ENCODE measurements at regions of chrX and their contacts with region 1.

Region 1: DNA sequence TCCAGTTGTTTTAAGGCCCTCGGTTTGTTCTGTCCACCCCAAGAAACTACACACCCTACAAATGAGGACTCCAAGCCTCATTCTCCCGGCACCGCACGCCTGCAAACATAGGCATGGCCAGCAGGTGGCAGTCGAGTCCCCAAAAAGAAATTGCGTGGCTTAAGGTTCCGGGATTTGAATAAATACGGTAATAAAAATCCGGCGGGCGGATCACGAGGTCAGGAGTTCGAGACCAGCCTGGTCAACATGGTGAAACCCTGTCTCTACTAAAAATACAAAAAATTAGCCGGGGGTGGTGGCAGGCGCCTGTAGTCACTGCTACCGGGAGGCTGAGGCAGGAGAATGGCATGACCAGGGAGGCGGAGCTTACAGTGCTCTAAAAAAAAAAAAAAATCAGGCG is 21.8 kb upstream of the CSF2RA start:
- DNase-seq: peak; percentile 74
- ATAC-seq: peak; percentile 53
- H3K4me3 ChIP-seq: no peak overlapping the region
- H3K27ac ChIP-seq: peak overlapping the region; percentile 65
- H3K4me1 ChIP-seq: peaks cover 7 to 46% of the 10 kb centered on the region in 2 experiments
- H3K27me3 ChIP-seq: no peaks in the 10 kb centered on the region
- CTCF ChIP-seq: peak in 2 of 3 experiments; percentile 75 to 79; a peak in 4 of 6 replicates
- POLR2A ChIP-seq: no peak
- RAD21 ChIP-seq: no peak

Region 2: DNA sequence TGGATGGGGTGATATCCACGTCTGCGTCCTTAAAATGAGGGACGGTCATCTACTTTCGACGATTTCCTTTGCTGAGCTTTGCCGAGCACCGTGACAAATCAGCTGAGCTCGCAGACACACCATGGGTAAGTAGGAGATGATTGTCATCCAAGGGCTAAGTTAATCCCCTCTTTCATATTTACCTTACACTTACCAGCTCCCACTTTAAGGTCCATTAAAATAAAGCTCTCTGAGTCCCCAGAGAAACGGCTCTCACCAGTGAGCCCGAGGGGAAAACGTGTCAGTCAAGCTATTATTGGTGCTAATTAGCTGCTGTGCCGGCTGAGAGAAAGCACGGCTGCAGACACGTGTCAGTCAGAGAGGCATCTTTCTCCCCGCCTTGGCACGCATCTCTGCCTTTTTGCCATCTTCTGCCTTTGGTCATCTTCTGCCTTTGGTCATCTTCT is 106.6 kb before region 1 on chrX:
- CTCF ChIA-PET with region 1: no interaction called
- POLR2A ChIA-PET with region 1: no interaction called
- RAD21 ChIA-PET with region 1: no interaction called
- intact Hi-C with region 1: no loop called
- DNase-seq: no peak
- ATAC-seq: no peak
- H3K4me3 ChIP-seq: no peak overlapping the region
- H3K27ac ChIP-seq: no peak overlapping the region
- H3K4me1 ChIP-seq: no peaks in the 10 kb centered on the region
- H3K27me3 ChIP-seq: no peaks in the 10 kb centered on the region
- CTCF ChIP-seq: no peak
- POLR2A ChIP-seq: no peak
- RAD21 ChIP-seq: no peak

Region 3: DNA sequence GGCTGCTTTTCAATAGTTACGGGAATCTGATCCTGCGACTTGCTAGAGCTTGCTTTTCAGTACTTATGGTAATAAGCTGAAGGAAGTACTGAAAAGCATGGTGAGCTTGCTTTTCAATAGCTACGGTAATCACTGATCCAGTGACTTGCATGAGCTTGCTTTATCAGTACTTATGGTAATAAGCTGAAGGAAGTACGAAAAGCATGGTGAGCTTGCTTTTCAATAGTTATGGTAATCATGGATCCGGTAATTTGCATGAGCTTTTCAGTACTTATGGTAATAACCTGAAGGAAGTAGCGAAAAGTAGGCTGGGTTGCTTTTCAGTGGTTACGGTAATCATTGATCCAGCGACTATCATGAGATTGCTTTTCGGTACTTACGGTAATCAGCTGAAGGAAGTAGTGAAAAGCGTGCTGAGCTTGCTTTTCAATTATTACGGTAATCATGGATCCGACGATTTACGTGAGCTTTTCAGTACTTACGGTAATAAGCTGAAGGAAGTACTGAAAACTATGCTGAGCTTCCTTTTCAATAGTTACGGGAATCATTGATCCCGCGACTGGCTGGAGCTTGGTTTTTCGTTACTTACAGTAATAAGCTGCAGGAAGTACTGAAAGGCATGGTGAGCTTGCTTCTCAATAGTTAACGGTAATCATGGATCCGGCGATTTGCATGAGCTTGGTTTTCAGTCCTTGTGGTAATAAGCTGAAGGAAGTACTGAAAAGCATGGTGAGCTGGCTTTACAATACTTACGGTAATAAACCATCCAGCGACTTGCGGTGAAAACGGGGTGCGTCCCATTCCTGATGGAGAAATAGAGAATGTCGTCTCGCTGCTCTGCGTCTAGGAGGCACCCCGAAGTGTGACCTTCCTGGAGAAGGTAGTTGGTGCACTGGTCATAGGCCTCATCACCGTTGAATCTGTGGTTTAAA is 40.9 kb before region 1 on chrX:
- CTCF ChIA-PET with region 1: no interaction called
- POLR2A ChIA-PET with region 1: no interaction called
- RAD21 ChIA-PET with region 1: no interaction called
- intact Hi-C with region 1: loop called (anchors 1 kb)
- DNase-seq: peak; percentile 95
- ATAC-seq: peak; percentile 71
- H3K4me3 ChIP-seq: peak overlapping the region; percentile 45 to 58
- H3K27ac ChIP-seq: peak overlapping the region; percentile 69; the same call in 1 of the 2 replicates
- H3K4me1 ChIP-seq: peaks cover 8 to 29% of the 10 kb centered on the region in 2 experiments
- H3K27me3 ChIP-seq: no peaks in the 10 kb centered on the region
- CTCF ChIP-seq: no peak
- POLR2A ChIP-seq: no peak
- RAD21 ChIP-seq: no peak

Region 4: GRCh38 chrX:1391707-1392375 is 145.0 kb after region 1 on chrX and contains the start of gene SLC25A6:
- CTCF ChIA-PET with region 1: no interaction called
- POLR2A ChIA-PET with region 1: no interaction called
- RAD21 ChIA-PET with region 1: no interaction called
- intact Hi-C with region 1: loop called (anchors 2 kb)
- DNase-seq: peak; percentile 86
- ATAC-seq: peak; percentile 93
- H3K4me3 ChIP-seq: peak within 1 kb of the TSS; percentile 95 to 96
- H3K27ac ChIP-seq: peak within 1 kb of the TSS; percentile 98
- H3K4me1 ChIP-seq: peaks cover 10 to 17% of the 10 kb centered on the region in 2 experiments; a peak in 3 of 4 replicates
- H3K27me3 ChIP-seq: no peaks in the 10 kb centered on the region
- CTCF ChIP-seq: no peak
- POLR2A ChIP-seq: peak; percentile 14
- RAD21 ChIP-seq: no peak
- total RNA-seq, gene SLC25A6: 398 TPM

Region 5: GRCh38 chrX:1576201-1576992 is 329.6 kb after region 1 on chrX:
- CTCF ChIA-PET with region 1: no interaction called
- POLR2A ChIA-PET with region 1: no interaction called
- RAD21 ChIA-PET with region 1: no interaction called
- intact Hi-C with region 1: no loop called
- DNase-seq: no peak
- ATAC-seq: no peak
- H3K4me3 ChIP-seq: no peak overlapping the region
- H3K27ac ChIP-seq: no peak overlapping the region
- H3K4me1 ChIP-seq: no peaks in the 10 kb centered on the region
- H3K27me3 ChIP-seq: no peaks in the 10 kb centered on the region
- CTCF ChIP-seq: no peak
- POLR2A ChIP-seq: no peak
- RAD21 ChIP-seq: no peak

Region 6: GRCh38 chrX:1778817-1779216 is 532.0 kb after region 1 on chrX:
- CTCF ChIA-PET with region 1: no interaction called
- POLR2A ChIA-PET with region 1: no interaction called
- RAD21 ChIA-PET with region 1: no interaction called
- intact Hi-C with region 1: no loop called
- DNase-seq: peak; percentile 24
- ATAC-seq: no peak
- H3K4me3 ChIP-seq: no peak overlapping the region
- H3K27ac ChIP-seq: no peak overlapping the region
- H3K4me1 ChIP-seq: peaks cover 0 to 13% of the 10 kb centered on the region in 2 experiments; a peak in 3 of 4 replicates
- H3K27me3 ChIP-seq: no peaks in the 10 kb centered on the region
- CTCF ChIP-seq: no peak
- POLR2A ChIP-seq: no peak
- RAD21 ChIP-seq: no peak

Measured in HCT116 (cell line).